Psoas muscle (tissue), 8 donors: ENCODE measurements at regions of chrX and their contacts with region 1.

Region 1: GRCh38 chrX:84907324-84907968 is 96.2 kb upstream of the APOOL start:
- DNase-seq: no peak
- ATAC-seq: no peak
- H3K4me3 ChIP-seq: no peak overlapping the region
- H3K27ac ChIP-seq: no peak overlapping the region
- H3K4me1 ChIP-seq: no peaks in the 10 kb centered on the region
- H3K27me3 ChIP-seq: no peaks in the 10 kb centered on the region
- CTCF ChIP-seq: peak; percentile 20

Region 2: GRCh38 chrX:84724576-84724975 is 182.9 kb before region 1 on chrX:
- intact Hi-C with region 1: no loop called
- DNase-seq: no peak
- ATAC-seq: peak; percentile 25 to 70 (median 40)
- H3K4me3 ChIP-seq: no peak overlapping the region
- H3K27ac ChIP-seq: no peak overlapping the region
- H3K4me1 ChIP-seq: no peaks in the 10 kb centered on the region
- H3K27me3 ChIP-seq: no peaks in the 10 kb centered on the region
- CTCF ChIP-seq: no peak

Region 3: GRCh38 chrX:84737471-84737871 is 170.0 kb before region 1 on chrX:
- intact Hi-C with region 1: loop called in 1 of 2 experiments (anchors 5 kb)
- DNase-seq: no peak
- ATAC-seq: no peak
- H3K4me3 ChIP-seq: no peak overlapping the region
- H3K27ac ChIP-seq: no peak overlapping the region
- H3K4me1 ChIP-seq: no peaks in the 10 kb centered on the region
- H3K27me3 ChIP-seq: peaks cover 0 to 5% (median 0%) of the 10 kb centered on the region in 3 donors
- CTCF ChIP-seq: no peak

Region 4: GRCh38 chrX:84747516-84747915 is 159.9 kb before region 1 on chrX:
- intact Hi-C with region 1: no loop called
- DNase-seq: no peak
- ATAC-seq: no peak
- H3K4me3 ChIP-seq: no peak overlapping the region
- H3K27ac ChIP-seq: no peak overlapping the region
- H3K4me1 ChIP-seq: no peaks in the 10 kb centered on the region
- H3K27me3 ChIP-seq: peaks cover 0 to 4% (median 0%) of the 10 kb centered on the region in 3 donors
- CTCF ChIP-seq: no peak